ENCODE measurements at regions of chr18 and their contacts with region 1.

Region 1: GRCh38 chr18:46073474-46074331 is 1.6 kb upstream of the PSTPIP2 start:
- DNase-seq: peak; percentile 68
- ATAC-seq: peak; percentile 60
- H3K4me3 Mint-ChIP-seq: no peak overlapping the region
- H3K27ac Mint-ChIP-seq: no peak overlapping the region
- H3K4me1 Mint-ChIP-seq: peaks cover 36% of the 10 kb centered on the region
- H3K27me3 Mint-ChIP-seq: no peaks in the 10 kb centered on the region

Region 2: GRCh38 chr18:45621061-45621511 is 452.6 kb before region 1 on chr18:
- CTCF ChIA-PET with region 1: no interaction called
- POLR2A ChIA-PET with region 1: interaction called, 3 read pairs
- intact Hi-C with region 1: loop called in 1 of 2 experiments (anchors 1 kb)
- DNase-seq: peak; percentile 51
- ATAC-seq: peak; percentile 47
- H3K4me3 Mint-ChIP-seq: no peak overlapping the region
- H3K27ac Mint-ChIP-seq: no peak overlapping the region
- H3K4me1 Mint-ChIP-seq: no peaks in the 10 kb centered on the region
- H3K27me3 Mint-ChIP-seq: peaks cover 8% of the 10 kb centered on the region

Region 3: GRCh38 chr18:45722899-45723298 is 350.8 kb before region 1 on chr18:
- CTCF ChIA-PET with region 1: interaction called, 14 read pairs
- POLR2A ChIA-PET with region 1: interaction called, 3 read pairs
- intact Hi-C with region 1: loop called in 1 of 2 experiments (anchors 2 kb)
- DNase-seq: peak; percentile 89
- ATAC-seq: peak; percentile 97
- H3K4me3 Mint-ChIP-seq: no peak overlapping the region
- H3K27ac Mint-ChIP-seq: no peak overlapping the region
- H3K4me1 Mint-ChIP-seq: no peaks in the 10 kb centered on the region
- H3K27me3 Mint-ChIP-seq: no peaks in the 10 kb centered on the region

Region 4: GRCh38 chr18:45910405-45911023 is 163.2 kb before region 1 on chr18:
- CTCF ChIA-PET with region 1: interaction called, 13 read pairs
- POLR2A ChIA-PET with region 1: no interaction called
- intact Hi-C with region 1: loop called in 1 of 2 experiments (anchors 1 kb)
- DNase-seq: peak; percentile 81
- ATAC-seq: peak; percentile 89
- H3K4me3 Mint-ChIP-seq: no peak overlapping the region
- H3K27ac Mint-ChIP-seq: no peak overlapping the region
- H3K4me1 Mint-ChIP-seq: no peaks in the 10 kb centered on the region
- H3K27me3 Mint-ChIP-seq: no peaks in the 10 kb centered on the region

Region 5: DNA sequence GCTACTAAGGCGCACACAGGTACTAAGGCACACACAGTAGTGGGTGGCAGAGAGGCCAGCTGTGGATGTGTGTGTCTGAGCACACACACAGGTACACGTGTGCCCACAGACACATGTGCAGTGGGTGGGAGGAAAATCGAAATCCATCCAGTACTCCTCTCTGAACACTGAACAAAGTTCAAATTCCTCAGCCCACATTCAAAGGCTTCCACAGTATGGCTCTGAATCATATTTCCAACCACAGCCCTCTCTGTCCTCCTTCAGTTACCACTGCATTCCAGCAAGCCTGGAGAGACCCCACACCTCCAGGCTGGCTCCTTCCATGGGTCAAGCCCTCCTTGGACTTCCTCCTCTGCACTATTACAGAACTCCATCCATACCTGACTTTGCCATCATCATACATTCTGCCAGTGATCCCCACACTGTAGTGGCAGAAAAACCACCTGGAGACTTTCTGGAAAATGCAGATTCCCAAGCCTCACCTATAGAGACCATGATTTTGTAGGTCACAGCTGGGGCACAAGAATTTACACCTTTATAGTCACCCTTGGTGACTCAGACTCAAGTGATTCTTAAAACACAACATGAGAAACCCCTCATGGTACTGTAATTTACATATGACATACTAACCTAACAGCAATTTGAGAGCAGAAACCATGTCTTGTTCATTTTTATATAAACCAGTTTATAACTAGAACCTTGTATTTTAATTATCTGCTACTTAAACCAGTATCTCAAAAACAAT is 137.9 kb before region 1 on chr18:
- CTCF ChIA-PET with region 1: interaction called, 8 read pairs
- POLR2A ChIA-PET with region 1: no interaction called
- intact Hi-C with region 1: loop called in 1 of 2 experiments (anchors 10 kb)
- DNase-seq: no peak
- ATAC-seq: peak; percentile 67
- H3K4me3 Mint-ChIP-seq: no peak overlapping the region
- H3K27ac Mint-ChIP-seq: no peak overlapping the region
- H3K4me1 Mint-ChIP-seq: peaks cover 31% of the 10 kb centered on the region
- H3K27me3 Mint-ChIP-seq: no peaks in the 10 kb centered on the region

Region 6: DNA sequence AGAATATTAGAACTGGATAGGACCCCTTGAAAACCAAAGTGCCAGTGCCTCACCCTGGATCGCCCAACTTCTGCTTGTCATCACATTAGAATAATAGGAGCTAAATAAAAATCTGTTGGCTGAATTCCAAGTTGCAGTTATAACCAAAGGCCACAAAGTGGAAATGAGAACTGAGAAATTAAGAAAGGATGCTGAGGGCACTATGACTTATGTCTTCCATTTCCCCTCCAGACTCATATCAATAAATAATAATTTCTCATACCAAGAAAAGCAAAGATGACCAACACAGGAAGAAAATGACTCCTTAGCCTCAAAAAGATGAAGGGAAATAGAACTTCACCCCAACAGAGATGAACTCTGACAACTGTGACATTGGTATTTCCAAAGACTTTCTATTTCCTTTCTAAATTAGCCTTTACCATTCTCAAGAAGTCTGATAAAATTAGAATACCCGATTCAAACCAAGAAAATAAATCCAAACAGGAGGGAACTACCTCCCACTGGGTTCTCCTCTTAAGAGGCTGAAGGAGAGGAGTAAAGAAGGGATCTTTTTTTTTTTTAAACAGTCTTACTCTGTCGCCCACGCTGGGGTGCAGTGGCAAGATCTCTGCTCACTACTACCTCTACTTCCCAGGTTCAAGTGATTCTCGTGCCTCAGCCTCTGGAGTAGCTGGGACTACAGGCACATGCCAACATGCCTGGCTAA is 60.1 kb before region 1 on chr18:
- CTCF ChIA-PET with region 1: interaction called, 7 read pairs
- POLR2A ChIA-PET with region 1: no interaction called
- intact Hi-C with region 1: loop called (anchors 1 kb)
- DNase-seq: peak; percentile 16
- ATAC-seq: peak; percentile 91
- H3K4me3 Mint-ChIP-seq: peak overlapping the region; percentile 20
- H3K27ac Mint-ChIP-seq: no peak overlapping the region
- H3K4me1 Mint-ChIP-seq: peaks cover 18% of the 10 kb centered on the region
- H3K27me3 Mint-ChIP-seq: no peaks in the 10 kb centered on the region

Region 7: DNA sequence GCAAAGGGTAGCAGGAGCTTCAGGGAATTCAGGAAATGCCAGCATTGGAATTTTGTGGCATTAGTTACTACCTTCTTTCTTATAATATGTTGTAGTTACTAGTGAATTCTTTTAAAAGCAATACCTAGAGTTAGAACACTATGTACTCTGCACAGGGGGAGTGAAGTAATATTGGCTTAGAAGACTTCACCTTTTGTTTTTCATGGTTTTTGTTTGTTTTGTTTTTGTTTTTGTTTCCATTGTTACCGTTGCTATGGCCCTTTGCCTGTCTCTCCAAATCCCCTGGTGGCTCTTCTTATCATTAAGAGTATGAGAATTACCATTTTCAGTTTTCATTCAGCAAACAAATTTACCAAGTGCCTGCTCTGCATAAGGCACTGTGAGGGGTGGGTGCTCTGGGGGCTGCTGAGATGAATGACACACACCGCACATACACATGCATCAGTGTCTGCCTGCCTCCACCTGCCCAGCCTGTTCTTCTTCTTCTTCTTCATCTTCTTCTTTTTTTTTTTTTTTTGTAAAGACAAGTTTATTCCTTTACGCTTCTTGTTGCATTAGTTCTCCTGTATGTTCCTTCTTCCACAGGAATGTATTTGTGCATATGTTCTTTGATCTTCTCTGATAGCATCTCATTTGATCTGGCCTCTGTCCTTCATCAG is 190.7 kb after region 1 on chr18:
- CTCF ChIA-PET with region 1: no interaction called
- POLR2A ChIA-PET with region 1: no interaction called
- intact Hi-C with region 1: no loop called
- DNase-seq: no peak
- ATAC-seq: peak; percentile 30
- H3K4me3 Mint-ChIP-seq: no peak overlapping the region
- H3K27ac Mint-ChIP-seq: no peak overlapping the region
- H3K4me1 Mint-ChIP-seq: peaks cover 57% of the 10 kb centered on the region
- H3K27me3 Mint-ChIP-seq: no peaks in the 10 kb centered on the region

Measured in activated CD4-positive, alpha-beta T cell treated with anti-CD3 and anti-CD28 coated beads for 36 hours (primary cell).